Activated CD4-positive, alpha-beta T cell treated with anti-CD3 and anti-CD28 coated beads, Interleukin-2, amount 10 ng/mL, durations not matched to agents 24 days and 14 days (primary cell): ENCODE measurements at regions of chr14 and their contacts with region 1.

Region 1: DNA sequence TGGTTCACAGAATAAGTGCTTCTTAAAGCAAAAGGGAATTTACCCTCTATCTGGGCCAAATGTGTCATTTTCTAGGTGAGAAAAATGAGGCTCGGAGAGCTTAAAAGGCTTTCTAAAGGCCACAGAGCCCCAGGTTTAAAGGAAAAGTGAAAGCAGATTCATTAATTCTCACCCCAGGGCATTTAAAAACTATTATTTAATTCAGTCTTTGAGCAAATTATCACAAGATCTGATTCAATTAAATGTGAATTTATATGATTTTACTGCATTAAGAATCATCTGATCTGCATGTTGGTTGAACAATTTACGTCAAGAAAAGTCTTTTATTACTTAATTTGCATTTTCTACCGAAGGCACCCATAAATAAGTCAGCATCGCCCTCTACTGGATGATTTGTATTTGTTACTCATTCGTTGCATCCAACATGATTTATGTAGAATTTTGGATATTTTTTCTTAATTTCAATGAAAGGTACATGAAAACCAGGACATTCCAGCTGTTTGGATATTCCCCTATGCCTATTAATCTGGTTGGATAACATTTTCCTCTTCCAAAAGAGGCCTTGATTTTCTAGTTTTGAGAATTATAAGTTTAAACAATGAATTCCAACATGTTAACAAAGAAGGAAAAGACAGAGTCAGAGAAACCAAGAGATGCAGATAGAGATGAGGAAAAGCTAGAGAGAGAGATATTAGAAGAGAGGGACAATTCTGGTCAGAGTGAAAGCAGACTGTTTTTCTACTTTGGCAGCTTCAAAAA is 19.1 kb upstream of the DHRS7 start:
- DNase-seq: peak; percentile 82
- H3K4me3 Mint-ChIP-seq: peak overlapping the region; percentile 77
- H3K27ac Mint-ChIP-seq: peak overlapping the region; percentile 75
- H3K4me1 Mint-ChIP-seq: peaks cover 11% of the 10 kb centered on the region
- H3K27me3 Mint-ChIP-seq: no peaks in the 10 kb centered on the region

Region 2: GRCh38 chr14:59126710-59127432 is 1057.5 kb before region 1 on chr14:
- intact Hi-C with region 1: loop called (anchors 10 kb)
- DNase-seq: peak; percentile 75
- H3K4me3 Mint-ChIP-seq: no peak overlapping the region
- H3K27ac Mint-ChIP-seq: no peak overlapping the region
- H3K4me1 Mint-ChIP-seq: no peaks in the 10 kb centered on the region
- H3K27me3 Mint-ChIP-seq: peaks cover 23% of the 10 kb centered on the region

Region 3: DNA sequence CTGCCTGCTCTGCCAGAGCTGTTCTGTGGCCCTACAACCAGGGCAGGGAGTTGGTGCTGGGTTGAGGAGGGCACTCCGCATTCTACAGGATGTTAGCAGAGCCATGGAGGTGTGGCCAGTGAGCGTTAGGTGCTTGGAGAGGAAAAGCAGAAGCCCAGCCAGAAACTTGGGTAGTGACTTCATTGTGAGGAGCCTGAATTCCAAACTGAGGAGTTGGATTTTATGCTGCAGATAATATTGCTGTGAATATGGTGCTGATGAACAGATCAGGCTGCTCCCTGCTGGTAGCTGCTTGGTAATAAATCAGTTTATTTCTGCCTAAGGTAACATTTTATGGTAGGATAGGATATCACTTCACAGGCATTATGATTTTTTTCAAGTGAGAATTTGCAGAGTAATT is 600.6 kb before region 1 on chr14:
- intact Hi-C with region 1: loop called (anchors 10 kb)
- DNase-seq: no peak
- H3K4me3 Mint-ChIP-seq: no peak overlapping the region
- H3K27ac Mint-ChIP-seq: no peak overlapping the region
- H3K4me1 Mint-ChIP-seq: peaks cover 4% of the 10 kb centered on the region
- H3K27me3 Mint-ChIP-seq: no peaks in the 10 kb centered on the region

Region 4: DNA sequence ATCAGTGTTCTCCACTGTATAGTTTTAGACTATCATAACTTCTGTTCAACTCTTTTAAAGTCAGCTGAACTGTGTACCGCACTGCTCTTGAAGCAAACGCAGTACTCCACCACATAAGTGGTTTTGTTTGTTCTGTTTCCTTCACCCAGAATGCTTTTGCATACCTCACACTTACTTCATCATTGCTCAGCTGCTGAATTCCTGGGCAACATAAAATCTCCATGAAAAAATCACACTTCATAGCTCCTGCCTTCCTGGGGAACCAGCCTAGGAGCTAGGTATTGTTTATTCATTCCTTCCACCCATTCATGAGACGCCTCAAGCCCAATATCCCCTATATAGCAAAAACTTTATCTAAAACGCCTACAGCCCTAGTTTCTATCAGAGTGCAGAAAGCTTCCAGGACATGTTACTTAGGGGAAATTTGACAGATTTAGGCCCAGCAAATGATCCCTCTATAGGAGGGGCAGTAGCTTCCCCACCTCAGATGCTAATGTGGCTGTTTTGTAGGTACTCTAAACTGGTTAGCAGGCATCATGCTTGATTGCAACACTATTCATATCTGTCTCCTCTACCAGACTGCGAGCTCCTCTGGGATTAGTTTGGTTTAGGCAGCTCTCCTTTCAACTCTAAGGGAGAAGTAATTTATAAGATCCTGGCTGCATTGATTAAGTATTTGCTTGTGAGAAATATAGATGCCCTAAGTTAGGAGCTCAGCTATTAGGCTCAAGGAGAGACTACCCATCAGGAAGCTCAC is 219.9 kb before region 1 on chr14:
- intact Hi-C with region 1: loop called (anchors 1 kb)
- DNase-seq: no peak
- H3K4me3 Mint-ChIP-seq: peak overlapping the region; percentile 78
- H3K27ac Mint-ChIP-seq: no peak overlapping the region
- H3K4me1 Mint-ChIP-seq: peaks cover 12% of the 10 kb centered on the region
- H3K27me3 Mint-ChIP-seq: peaks cover 7% of the 10 kb centered on the region

Region 5: DNA sequence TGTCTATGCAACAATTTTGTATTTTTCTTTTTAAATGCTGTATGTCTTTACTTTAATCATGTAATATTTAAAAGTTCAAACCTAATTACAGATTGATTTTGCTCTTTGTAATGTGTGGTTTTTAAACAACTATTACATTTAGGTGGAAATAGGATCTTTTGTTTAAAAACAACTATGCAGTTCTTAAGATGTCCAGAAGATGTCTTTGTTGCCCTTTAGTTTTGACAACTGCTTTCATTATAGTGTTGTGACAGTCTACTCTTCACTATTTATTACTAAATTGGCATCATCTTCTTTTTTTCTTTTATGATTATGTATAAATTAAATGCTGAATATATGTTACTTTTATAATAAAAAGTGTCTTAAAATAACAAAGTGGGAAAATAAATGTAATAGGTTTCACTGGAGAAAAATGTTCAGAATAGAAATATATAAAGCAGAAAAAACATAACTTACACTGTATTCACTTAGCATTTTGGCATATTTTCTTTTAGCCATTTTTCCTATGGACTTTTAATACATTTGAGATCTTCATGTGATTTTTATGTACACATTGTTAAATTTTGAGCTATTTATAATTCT is 119.7 kb before region 1 on chr14:
- intact Hi-C with region 1: loop called (anchors 1 kb)
- DNase-seq: no peak
- H3K4me3 Mint-ChIP-seq: no peak overlapping the region
- H3K27ac Mint-ChIP-seq: no peak overlapping the region
- H3K4me1 Mint-ChIP-seq: no peaks in the 10 kb centered on the region
- H3K27me3 Mint-ChIP-seq: peaks cover 10% of the 10 kb centered on the region

Region 6: GRCh38 chr14:60164712-60165546 is 19.4 kb before region 1 on chr14 and contains the start of gene DHRS7:
- intact Hi-C with region 1: loop called (anchors 1 kb)
- DNase-seq: peak; percentile 89
- H3K4me3 Mint-ChIP-seq: peak within 1 kb of the TSS; percentile 98
- H3K27ac Mint-ChIP-seq: peak within 1 kb of the TSS; percentile 99
- H3K4me1 Mint-ChIP-seq: peaks cover 30% of the 10 kb centered on the region
- H3K27me3 Mint-ChIP-seq: no peaks in the 10 kb centered on the region
- total RNA-seq, gene DHRS7: 42.9 TPM in 2 replicates